Activated CD4-positive, alpha-beta memory T cell treated with anti-CD3 and anti-CD28 coated beads for 36 hours (primary cell): ENCODE measurements at regions of chr1 and their contacts with region 1.

Region 1: GRCh38 chr1:210951279-210951678 is 182.7 kb downstream of the KCNH1 start:
- DNase-seq: no peak
- H3K4me3 Mint-ChIP-seq: no peak overlapping the region
- H3K27ac Mint-ChIP-seq: no peak overlapping the region
- H3K4me1 Mint-ChIP-seq: no peaks in the 10 kb centered on the region
- H3K27me3 Mint-ChIP-seq: peaks cover 2% of the 10 kb centered on the region

Region 2: GRCh38 chr1:210407207-210407886 is 543.9 kb before region 1 on chr1:
- CTCF ChIA-PET with region 1: interaction called, 6 read pairs
- POLR2A ChIA-PET with region 1: no interaction called
- intact Hi-C with region 1: loop called (anchors 1 kb)
- DNase-seq: peak; percentile 84
- H3K4me3 Mint-ChIP-seq: no peak overlapping the region
- H3K27ac Mint-ChIP-seq: no peak overlapping the region
- H3K4me1 Mint-ChIP-seq: peaks cover 2% of the 10 kb centered on the region
- H3K27me3 Mint-ChIP-seq: no peaks in the 10 kb centered on the region

Region 3: DNA sequence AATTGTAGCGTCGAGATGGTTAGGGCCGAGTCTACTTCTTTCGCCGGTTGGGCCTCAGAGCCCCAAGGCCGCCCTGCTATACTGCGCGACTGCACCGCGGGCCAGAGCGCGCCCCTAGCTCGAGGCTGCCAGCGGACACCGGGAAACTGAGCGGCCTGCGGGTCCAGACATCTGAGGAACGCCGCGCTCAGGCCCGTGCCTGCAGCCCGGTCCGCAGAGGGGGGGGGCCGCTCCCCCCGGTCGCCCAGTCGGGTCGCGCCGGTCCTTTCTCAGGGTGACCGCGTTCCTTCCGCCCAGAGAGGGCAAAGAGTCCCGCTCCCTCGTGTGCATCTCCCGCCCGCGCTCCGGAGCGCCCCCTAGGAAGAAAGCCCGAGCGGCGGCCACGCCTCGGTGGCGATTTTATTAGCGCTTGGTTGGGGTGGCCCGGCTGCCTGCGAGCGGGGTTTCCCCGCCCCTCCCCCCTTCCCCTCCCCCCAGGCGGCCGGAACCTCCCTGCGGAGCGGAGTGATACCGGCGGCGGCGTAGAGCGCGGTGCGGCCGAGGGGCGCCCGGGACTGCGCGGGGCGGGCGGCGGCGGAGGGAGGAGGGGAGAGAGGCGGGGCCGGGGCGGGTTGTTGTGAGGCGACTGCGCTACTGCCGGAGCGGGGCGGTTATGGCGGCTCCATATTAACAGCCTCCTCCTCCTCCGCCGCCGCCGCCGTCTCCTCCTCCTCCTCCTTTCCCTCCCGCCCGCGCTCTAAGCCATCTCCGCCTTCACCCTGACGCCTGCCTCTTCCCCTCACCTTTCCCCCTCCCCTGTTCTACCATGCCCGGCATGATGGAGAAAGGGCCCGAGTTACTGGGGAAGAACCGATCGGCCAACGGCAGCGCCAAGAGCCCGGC is 307.7 kb after region 1 on chr1 and contains the start of gene RCOR3:
- CTCF ChIA-PET with region 1: no interaction called
- POLR2A ChIA-PET with region 1: no interaction called
- intact Hi-C with region 1: no loop called
- DNase-seq: peak; percentile 95
- H3K4me3 Mint-ChIP-seq: peak within 1 kb of the TSS; percentile 83
- H3K27ac Mint-ChIP-seq: peak within 1 kb of the TSS; percentile 93
- H3K4me1 Mint-ChIP-seq: peaks cover 16% of the 10 kb centered on the region
- H3K27me3 Mint-ChIP-seq: no peaks in the 10 kb centered on the region
- total RNA-seq, gene RCOR3: 30.2 to 32.7 TPM